Mammary epithelial cell (primary cell): ENCODE measurements at regions of chr13 and their contacts with region 1.

Region 1: DNA sequence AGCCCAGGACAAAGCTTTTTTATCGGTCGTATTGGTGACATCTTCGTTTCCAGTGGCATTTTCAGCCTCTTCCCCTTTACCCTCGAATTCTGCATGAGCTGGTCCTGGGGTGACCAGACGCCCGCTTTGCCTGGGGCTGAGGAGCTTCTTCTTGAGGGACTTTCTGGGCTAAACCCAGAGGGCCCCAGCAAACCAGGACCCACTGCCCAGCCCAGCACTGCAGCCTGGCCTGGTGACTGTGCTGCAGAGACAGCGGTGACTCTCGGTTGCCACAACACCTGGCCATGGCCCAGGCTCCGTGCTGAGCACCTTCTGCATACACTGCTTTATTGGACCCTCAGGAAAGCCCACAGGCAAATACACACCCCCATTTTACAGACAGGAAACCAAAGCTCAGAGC is 21.0 kb downstream of the SPACA7 start:
- DNase-seq: no peak
- H3K4me3 ChIP-seq: no peak overlapping the region
- H3K27ac ChIP-seq: no peak overlapping the region
- H3K4me1 ChIP-seq: no peaks in the 10 kb centered on the region
- H3K27me3 ChIP-seq: no peaks in the 10 kb centered on the region
- CTCF ChIP-seq: no peak

Region 2: GRCh38 chr13:110950819-110951570 is 1446.1 kb before region 1 on chr13:
- CTCF ChIA-PET with region 1: no interaction called
- dilution Hi-C with region 1: no loop called
- in situ Hi-C with region 1: loop called in 1 of 2 experiments (anchors 5 kb)
- intact Hi-C with region 1: no loop called
- DNase-seq: no peak
- H3K4me3 ChIP-seq: no peak overlapping the region
- H3K27ac ChIP-seq: no peak overlapping the region
- H3K4me1 ChIP-seq: peaks cover 17% of the 10 kb centered on the region
- H3K27me3 ChIP-seq: no peaks in the 10 kb centered on the region
- CTCF ChIP-seq: no peak

Region 3: DNA sequence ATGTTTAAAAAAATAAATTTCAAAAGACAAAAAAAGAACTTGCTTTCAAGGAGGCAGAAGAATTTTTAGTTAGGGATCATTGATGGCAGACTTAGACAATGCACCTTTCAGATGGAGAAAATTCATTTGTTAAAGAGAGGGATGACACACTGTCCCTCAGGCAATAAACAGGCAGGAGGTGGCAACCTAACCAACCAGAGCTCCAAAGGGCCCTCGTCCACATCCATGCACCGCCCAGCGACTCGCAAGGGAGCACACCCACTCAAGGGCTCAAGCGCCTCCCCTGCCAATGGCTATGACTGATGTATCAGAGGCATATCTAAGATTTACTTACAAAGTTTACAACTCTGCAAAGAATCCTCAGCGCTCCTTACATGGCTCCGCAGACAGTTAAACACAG is 108.9 kb after region 1 on chr13:
- CTCF ChIA-PET with region 1: no interaction called
- dilution Hi-C with region 1: no loop called
- in situ Hi-C with region 1: no loop called
- intact Hi-C with region 1: no loop called
- DNase-seq: peak; percentile 22
- H3K4me3 ChIP-seq: no peak overlapping the region
- H3K27ac ChIP-seq: no peak overlapping the region
- H3K4me1 ChIP-seq: no peaks in the 10 kb centered on the region
- H3K27me3 ChIP-seq: no peaks in the 10 kb centered on the region
- CTCF ChIP-seq: no peak

Region 4: DNA sequence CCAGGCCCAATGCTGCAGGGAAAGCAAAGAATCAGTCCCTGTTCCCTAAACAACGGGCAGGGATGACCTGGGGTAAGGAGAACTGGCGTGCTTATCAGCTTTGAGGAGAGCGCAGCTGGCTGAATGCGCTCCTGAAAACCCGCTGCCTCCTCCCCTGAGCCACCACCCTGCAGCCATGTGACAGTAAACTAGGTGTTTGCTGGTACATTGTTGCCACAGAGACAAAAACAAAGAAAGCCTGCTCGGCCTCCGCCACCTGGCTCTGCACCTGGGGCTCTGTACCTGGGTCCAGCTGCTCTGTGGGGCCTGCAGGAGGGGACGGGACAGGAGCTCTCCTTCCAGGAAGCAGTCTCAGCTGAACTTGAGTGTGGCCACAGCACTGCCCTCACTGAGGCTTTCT is 593.7 kb after region 1 on chr13:
- CTCF ChIA-PET with region 1: no interaction called
- dilution Hi-C with region 1: no loop called
- in situ Hi-C with region 1: no loop called
- intact Hi-C with region 1: no loop called
- DNase-seq: peak; percentile 1
- H3K4me3 ChIP-seq: no peak overlapping the region
- H3K27ac ChIP-seq: no peak overlapping the region
- H3K4me1 ChIP-seq: no peaks in the 10 kb centered on the region
- H3K27me3 ChIP-seq: no peaks in the 10 kb centered on the region
- CTCF ChIP-seq: no peak